Activated naive CD4-positive, alpha-beta T cell treated with anti-CD3 and anti-CD28 coated beads for 36 hours (primary cell): ENCODE measurements at regions of chr1 and their contacts with region 1.

Region 1: GRCh38 chr1:241895013-241895412 is 47.0 kb downstream of the EXO1 start:
- DNase-seq: no peak
- H3K4me3 Mint-ChIP-seq: no peak overlapping the region
- H3K27ac Mint-ChIP-seq: no peak overlapping the region
- H3K4me1 Mint-ChIP-seq: no peaks in the 10 kb centered on the region
- H3K27me3 Mint-ChIP-seq: no peaks in the 10 kb centered on the region

Region 2: GRCh38 chr1:241985787-241986186 is 90.8 kb after region 1 on chr1:
- CTCF ChIA-PET with region 1: interaction called, 5 read pairs
- intact Hi-C with region 1: loop called (anchors 1 kb)
- DNase-seq: peak; percentile 43
- H3K4me3 Mint-ChIP-seq: no peak overlapping the region
- H3K27ac Mint-ChIP-seq: no peak overlapping the region
- H3K4me1 Mint-ChIP-seq: no peaks in the 10 kb centered on the region
- H3K27me3 Mint-ChIP-seq: no peaks in the 10 kb centered on the region

Region 3: GRCh38 chr1:242017584-242018233 is 122.7 kb after region 1 on chr1:
- CTCF ChIA-PET with region 1: interaction called, 5 read pairs
- intact Hi-C with region 1: loop called (anchors 1 kb)
- DNase-seq: peak; percentile 43
- H3K4me3 Mint-ChIP-seq: no peak overlapping the region
- H3K27ac Mint-ChIP-seq: no peak overlapping the region
- H3K4me1 Mint-ChIP-seq: no peaks in the 10 kb centered on the region
- H3K27me3 Mint-ChIP-seq: no peaks in the 10 kb centered on the region